Esophagus muscularis mucosa (tissue), 4 donors: ENCODE measurements at regions of chr12 and their contacts with region 1.

Region 1: GRCh38 chr12:818733-819132 is 66.4 kb downstream of the WNK1 start:
- DNase-seq: no peak
- H3K4me3 ChIP-seq: no peak overlapping the region
- H3K27ac ChIP-seq: peak overlapping the region; percentile 36 to 55 (median 46)
- H3K4me1 ChIP-seq: peaks cover 16 to 35% (median 28%) of the 10 kb centered on the region in 4 donors
- H3K27me3 ChIP-seq: no peaks in the 10 kb centered on the region
- CTCF ChIP-seq: peak in 1 of 3 experiments; percentile 31
- EP300 ChIP-seq: no peak
- POLR2A ChIP-seq: no peak

Region 2: DNA sequence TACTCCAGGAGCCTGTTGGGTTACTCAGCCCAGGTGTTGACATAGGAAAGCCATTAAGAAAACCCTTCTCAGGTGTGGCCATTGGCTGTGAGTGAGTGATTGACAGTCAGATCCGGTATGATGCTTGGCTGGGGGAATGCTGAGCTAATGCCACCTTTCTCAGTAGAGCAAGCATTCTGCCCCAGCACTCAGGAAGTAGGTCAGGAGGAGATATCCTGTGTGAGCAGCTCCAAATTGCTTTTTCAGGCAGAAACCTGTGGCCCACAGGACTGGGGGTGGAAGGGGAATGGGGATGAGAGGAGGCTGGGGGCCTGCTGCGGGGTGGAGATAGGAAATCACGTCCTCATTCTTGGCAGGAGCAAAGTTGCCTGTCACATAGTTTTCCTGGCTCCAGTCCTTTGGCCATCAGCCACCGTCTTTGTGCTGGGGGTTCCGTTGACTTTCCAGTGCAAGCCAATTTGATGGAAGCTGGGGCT is 211.2 kb before region 1 on chr12:
- intact Hi-C with region 1: no loop called
- DNase-seq: no peak
- H3K4me3 ChIP-seq: no peak overlapping the region
- H3K27ac ChIP-seq: peak overlapping the region in 2 of 4 donors; percentile 40 to 47
- H3K4me1 ChIP-seq: peaks cover 14 to 29% (median 28%) of the 10 kb centered on the region in 4 donors
- H3K27me3 ChIP-seq: no peaks in the 10 kb centered on the region
- CTCF ChIP-seq: no peak
- EP300 ChIP-seq: no peak
- POLR2A ChIP-seq: no peak

Region 3: DNA sequence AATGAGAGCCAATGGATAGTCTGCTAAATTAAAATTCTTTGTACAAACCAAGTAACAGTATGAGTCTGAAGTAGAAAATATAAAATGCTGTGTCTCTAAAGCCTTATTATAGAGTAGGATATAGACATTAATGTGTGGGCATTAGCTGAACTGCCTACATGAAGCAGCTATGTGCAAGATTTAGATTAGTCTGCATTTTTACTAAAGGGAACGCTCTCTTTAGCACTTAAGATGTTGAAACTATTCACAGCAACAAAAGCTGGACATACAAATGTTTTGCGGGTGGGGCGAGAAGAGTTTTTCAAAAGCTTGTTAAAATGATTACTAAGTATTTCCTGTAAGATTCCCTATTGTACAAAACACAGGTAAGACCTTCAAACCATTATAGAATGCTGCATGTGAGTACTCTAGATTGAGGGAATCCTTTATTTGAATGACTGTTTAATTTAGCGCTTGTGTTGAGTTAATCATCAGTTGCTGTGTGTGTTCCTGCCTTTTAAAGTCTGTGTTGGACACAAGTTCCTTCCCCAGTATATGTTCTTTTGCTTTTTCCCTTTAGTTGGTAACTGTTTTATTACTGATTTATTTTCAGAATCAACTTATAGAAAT is 43.7 kb after region 1 on chr12:
- intact Hi-C with region 1: loop called (anchors 5 kb)
- DNase-seq: no peak
- H3K4me3 ChIP-seq: no peak overlapping the region
- H3K27ac ChIP-seq: no peak overlapping the region
- H3K4me1 ChIP-seq: peaks cover 0 to 12% (median 11%) of the 10 kb centered on the region in 4 donors
- H3K27me3 ChIP-seq: no peaks in the 10 kb centered on the region
- CTCF ChIP-seq: no peak
- EP300 ChIP-seq: no peak
- POLR2A ChIP-seq: no peak

Region 4: DNA sequence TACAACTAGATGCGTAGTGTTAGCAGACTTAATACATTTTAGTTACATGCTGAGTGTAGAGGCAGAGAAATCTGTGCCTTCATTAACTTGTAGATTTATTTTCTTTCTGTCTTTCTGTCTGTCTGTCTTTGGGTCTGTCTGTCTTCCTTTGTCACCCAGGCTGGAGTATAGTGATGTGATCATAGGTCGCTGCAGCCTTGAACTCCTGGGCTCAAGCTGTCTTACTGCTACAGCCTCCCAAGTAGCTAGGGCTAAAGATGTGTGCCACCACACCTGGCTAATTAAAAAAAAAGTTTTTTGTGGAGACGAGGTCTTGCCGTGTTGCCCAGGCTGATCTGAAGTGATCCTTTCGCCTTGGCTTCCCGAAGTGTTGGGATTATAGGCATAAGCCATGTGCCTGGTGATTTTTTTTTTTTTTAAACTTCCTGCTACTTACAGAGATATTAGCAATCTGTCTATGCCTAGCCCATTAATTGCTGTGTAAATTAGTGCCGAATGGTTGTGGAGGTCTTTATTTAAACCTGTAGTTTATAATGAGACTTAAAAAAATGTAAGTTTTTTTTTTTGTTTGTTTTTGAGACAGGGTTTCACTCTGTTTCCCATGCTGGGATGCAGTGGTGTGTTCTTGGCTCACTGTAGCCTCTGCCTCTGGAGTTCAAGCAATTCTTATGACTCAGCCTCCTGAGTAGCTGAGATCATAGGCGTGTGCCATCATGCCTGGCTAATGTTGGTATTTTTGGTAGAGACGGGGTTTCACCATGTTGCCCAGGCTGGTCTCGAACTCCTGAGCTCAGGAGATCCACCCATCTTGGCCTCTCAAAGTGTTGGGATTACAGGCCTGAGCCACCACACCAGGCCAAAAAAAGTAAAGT is 195.1 kb after region 1 on chr12:
- intact Hi-C with region 1: no loop called
- DNase-seq: no peak
- H3K4me3 ChIP-seq: no peak overlapping the region
- H3K27ac ChIP-seq: no peak overlapping the region
- H3K4me1 ChIP-seq: peaks cover 3 to 16% (median 8%) of the 10 kb centered on the region in 4 donors
- H3K27me3 ChIP-seq: no peaks in the 10 kb centered on the region
- CTCF ChIP-seq: no peak
- EP300 ChIP-seq: no peak
- POLR2A ChIP-seq: no peak